ENCODE measurements at regions of chr7 and their contacts with region 1.

Region 1: GRCh38 chr7:142516038-142516501 is 233.2 kb upstream of the PRSS1 start:
- DNase-seq: peak in 7 of 14 experiments; percentile 22 to 79 (median 55)
- ATAC-seq: peak; percentile 72
- H3K4me3 ChIP-seq: no peak overlapping the region
- H3K4me3 Mint-ChIP-seq: no peak overlapping the region
- H3K27ac ChIP-seq: no peak overlapping the region
- H3K27ac Mint-ChIP-seq: peak overlapping the region; percentile 16
- H3K4me1 ChIP-seq: peaks cover 40% of the 10 kb centered on the region
- H3K4me1 Mint-ChIP-seq: peaks cover 58% of the 10 kb centered on the region
- H3K27me3 ChIP-seq: no peaks in the 10 kb centered on the region
- H3K27me3 Mint-ChIP-seq: no peaks in the 10 kb centered on the region
- CTCF ChIP-seq: peak; percentile 63

Region 2: DNA sequence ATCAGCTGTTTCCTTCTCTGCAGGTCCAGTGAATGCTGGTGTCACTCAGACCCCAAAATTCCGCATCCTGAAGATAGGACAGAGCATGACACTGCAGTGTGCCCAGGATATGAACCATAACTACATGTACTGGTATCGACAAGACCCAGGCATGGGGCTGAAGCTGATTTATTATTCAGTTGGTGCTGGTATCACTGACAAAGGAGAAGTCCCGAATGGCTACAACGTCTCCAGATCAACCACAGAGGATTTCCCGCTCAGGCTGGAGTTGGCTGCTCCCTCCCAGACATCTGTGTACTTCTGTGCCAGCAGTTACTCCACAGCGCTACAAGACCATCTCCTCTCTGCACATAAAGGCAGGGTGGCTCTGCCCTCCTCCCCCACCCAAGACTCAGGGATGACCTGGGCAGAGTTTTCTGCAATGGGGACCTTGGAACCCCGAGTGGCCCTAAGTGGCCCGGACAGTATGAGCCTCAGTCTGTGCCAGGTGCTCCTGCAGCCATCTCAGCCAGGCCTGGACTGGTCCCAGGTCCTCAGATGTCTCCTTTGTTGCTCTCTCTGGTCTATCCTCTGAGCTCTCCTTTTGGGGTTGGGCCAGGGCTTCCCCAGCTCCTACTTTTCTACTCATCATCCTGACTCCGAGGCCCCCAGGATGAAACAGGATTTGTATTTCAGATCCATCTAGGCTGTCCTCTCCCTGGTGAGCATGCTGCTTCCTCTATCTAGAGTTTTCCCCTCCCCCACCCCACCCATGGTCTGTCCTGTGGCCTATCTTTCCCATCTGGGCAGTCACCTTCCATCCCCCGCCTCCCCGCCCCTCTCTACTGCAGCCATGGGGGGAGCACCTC is 46.1 kb before region 1 on chr7:
- CTCF ChIA-PET with region 1: no interaction called
- POLR2A ChIA-PET with region 1: no interaction called
- intact Hi-C with region 1: loop called in 1 of 2 experiments (anchors 5 kb)
- DNase-seq: no peak
- ATAC-seq: no peak
- H3K4me3 ChIP-seq: peak overlapping the region; percentile 7
- H3K4me3 Mint-ChIP-seq: peak overlapping the region; percentile 56
- H3K27ac ChIP-seq: no peak overlapping the region
- H3K27ac Mint-ChIP-seq: peak overlapping the region; percentile 10
- H3K4me1 ChIP-seq: peaks cover 54% of the 10 kb centered on the region
- H3K4me1 Mint-ChIP-seq: peaks cover 86% of the 10 kb centered on the region
- H3K27me3 ChIP-seq: no peaks in the 10 kb centered on the region
- H3K27me3 Mint-ChIP-seq: no peaks in the 10 kb centered on the region
- CTCF ChIP-seq: no peak

Region 3: DNA sequence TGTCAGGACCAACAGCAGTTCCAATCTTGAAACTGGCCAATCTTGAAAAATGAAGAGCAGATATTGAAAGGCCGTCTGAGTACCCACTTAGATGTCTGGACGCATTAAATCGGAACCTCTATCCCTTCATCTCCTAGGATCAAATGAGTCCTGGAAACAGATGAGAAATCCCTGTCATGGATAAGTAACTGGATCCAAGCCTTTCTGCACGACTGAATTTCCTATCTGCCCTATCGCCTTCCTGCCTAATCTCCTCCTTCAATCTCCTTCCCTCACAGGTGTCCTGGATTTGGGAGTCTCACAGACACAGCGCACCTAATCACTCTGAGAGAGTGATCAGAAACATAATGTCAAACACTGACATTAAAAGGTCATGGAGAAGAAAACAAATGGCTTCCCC is 13.0 kb before region 1 on chr7:
- CTCF ChIA-PET with region 1: interaction called, 14 read pairs
- POLR2A ChIA-PET with region 1: interaction called, 4 read pairs
- intact Hi-C with region 1: loop called (anchors 2 kb)
- DNase-seq: no peak
- ATAC-seq: no peak
- H3K4me3 ChIP-seq: no peak overlapping the region
- H3K4me3 Mint-ChIP-seq: no peak overlapping the region
- H3K27ac ChIP-seq: no peak overlapping the region
- H3K27ac Mint-ChIP-seq: no peak overlapping the region
- H3K4me1 ChIP-seq: peaks cover 24% of the 10 kb centered on the region
- H3K4me1 Mint-ChIP-seq: peaks cover 50% of the 10 kb centered on the region
- H3K27me3 ChIP-seq: no peaks in the 10 kb centered on the region
- H3K27me3 Mint-ChIP-seq: no peaks in the 10 kb centered on the region
- CTCF ChIP-seq: no peak

Measured in CD4-positive, alpha-beta T cell (primary cell).